Cardiac septum (tissue), 1 donor: ENCODE measurements at regions of chr5 and their contacts with region 1.

Region 1: DNA sequence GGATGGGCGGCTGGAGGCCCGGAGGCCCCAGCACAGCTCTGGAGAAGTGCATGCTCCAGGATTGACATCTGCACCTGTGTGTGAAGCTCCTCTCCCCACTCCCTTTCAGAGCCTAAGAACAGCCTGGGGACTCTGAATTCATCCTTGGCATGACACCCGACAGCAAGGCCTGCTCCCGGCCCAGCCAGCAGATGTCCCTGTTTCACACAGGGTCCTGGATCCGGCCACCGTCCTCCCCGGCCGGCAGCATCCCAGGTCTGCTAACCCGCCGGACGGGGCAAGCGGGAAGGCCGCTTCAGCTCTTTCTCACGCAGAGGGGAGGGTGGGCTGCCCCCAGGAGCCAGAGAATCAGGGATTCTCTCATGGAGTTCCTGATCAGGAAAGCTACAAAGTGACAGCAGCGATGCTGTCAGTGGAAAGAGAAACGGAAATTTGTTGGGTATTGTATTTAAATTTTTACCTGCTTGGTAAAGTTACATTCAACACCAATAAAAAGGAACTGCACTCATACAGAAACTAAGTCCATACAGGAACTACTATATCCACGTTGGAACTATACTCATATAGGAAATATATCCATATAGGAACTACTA is 325.3 kb upstream of the IRX4 start:
- DNase-seq: no peak

Region 2: GRCh38 chr5:2453781-2454180 is 245.7 kb after region 1 on chr5:
- intact Hi-C with region 1: no loop called
- DNase-seq: no peak

Region 3: GRCh38 chr5:3602785-3603502 is 1394.9 kb after region 1 on chr5:
- intact Hi-C with region 1: loop called (anchors 10 kb)
- DNase-seq: no peak